ENCODE measurements at regions of chr19 and their contacts with region 1.

Region 1: GRCh38 chr19:35851213-35852028 is 883 bp downstream of the NPHS1 start:
- DNase-seq: no peak
- H3K4me3 ChIP-seq: no peak overlapping the region
- H3K27ac ChIP-seq: no peak overlapping the region
- H3K4me1 ChIP-seq: peaks cover 3% of the 10 kb centered on the region
- H3K27me3 ChIP-seq: peaks cover 6% of the 10 kb centered on the region
- CTCF ChIP-seq: no peak

Region 2: GRCh38 chr19:35430409-35431144 is 420.8 kb before region 1 on chr19:
- CTCF ChIA-PET with region 1: no interaction called
- dilution Hi-C with region 1: loop called (anchors 5 kb)
- in situ Hi-C with region 1: no loop called
- intact Hi-C with region 1: no loop called
- DNase-seq: no peak
- H3K4me3 ChIP-seq: no peak overlapping the region
- H3K27ac ChIP-seq: no peak overlapping the region
- H3K4me1 ChIP-seq: no peaks in the 10 kb centered on the region
- H3K27me3 ChIP-seq: no peaks in the 10 kb centered on the region
- CTCF ChIP-seq: no peak

Region 3: DNA sequence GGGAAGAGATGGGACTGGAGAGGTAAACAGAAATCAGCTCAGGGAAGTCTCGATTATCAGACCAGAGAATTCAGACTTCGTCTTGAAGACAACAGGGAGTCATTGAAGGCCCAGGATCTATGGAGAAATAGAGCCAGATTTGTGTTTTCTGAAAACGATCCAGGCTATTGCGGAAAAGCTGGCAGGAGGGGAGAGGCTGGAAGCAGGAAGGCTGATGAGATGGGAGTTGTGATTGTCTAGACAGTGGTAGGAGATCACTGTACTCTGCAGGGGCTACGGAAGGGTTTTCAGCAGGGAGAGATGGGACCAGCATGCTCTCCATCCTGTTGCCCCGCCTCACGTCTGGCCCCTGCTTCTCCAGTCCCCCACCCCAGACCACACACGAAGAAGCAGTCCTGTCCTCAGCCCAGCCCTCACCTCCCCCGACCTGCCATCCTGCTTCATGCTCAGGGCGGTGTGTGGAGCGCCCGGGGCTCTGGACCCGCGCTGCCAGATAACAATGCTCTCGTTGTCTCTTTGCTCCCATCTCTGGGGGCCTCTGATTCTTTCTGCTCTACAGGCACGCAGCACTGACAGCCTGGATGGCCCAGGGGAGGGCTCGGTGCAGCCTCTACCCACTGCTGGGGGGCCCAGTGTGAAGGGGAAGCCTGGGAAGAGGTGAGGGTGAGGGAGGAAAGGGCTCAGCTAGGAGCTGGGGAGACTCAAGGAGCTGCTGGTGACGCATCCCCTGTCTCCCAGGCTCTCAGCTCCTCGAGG is 74.2 kb before region 1 on chr19:
- CTCF ChIA-PET with region 1: no interaction called
- dilution Hi-C with region 1: no loop called
- in situ Hi-C with region 1: no loop called
- intact Hi-C with region 1: no loop called
- DNase-seq: no peak
- H3K4me3 ChIP-seq: no peak overlapping the region
- H3K27ac ChIP-seq: no peak overlapping the region
- H3K4me1 ChIP-seq: no peaks in the 10 kb centered on the region
- H3K27me3 ChIP-seq: no peaks in the 10 kb centered on the region
- CTCF ChIP-seq: no peak

Region 4: GRCh38 chr19:35805526-35806102 is 45.8 kb before region 1 on chr19:
- CTCF ChIA-PET with region 1: no interaction called
- dilution Hi-C with region 1: loop called (anchors 5 kb)
- in situ Hi-C with region 1: no loop called
- intact Hi-C with region 1: no loop called
- DNase-seq: no peak
- H3K4me3 ChIP-seq: no peak overlapping the region
- H3K27ac ChIP-seq: no peak overlapping the region
- H3K4me1 ChIP-seq: no peaks in the 10 kb centered on the region
- H3K27me3 ChIP-seq: no peaks in the 10 kb centered on the region
- CTCF ChIP-seq: no peak

Region 5: DNA sequence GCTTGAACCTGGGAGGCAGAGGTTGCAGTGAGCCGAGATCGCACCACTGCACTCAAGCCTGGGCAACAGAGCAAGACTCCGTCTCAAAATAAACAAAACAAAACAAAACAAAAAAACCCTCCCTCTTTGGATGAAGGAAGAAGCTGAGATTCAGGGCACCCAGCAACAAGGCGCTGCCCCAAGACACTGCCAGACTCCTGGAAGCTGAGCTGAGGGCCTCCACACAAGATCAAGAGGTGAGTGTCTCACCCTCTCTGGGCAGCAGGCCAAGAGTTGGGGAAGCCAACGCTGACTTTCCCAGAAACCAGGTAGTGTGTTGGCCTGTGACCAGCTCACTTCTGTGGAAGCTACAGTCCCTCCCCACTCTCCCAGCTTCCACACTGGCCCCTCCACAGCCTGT is 60.4 kb after region 1 on chr19:
- CTCF ChIA-PET with region 1: no interaction called
- dilution Hi-C with region 1: loop called (anchors 5 kb)
- in situ Hi-C with region 1: no loop called
- intact Hi-C with region 1: no loop called
- DNase-seq: peak; percentile 91
- H3K4me3 ChIP-seq: no peak overlapping the region
- H3K27ac ChIP-seq: no peak overlapping the region
- H3K4me1 ChIP-seq: no peaks in the 10 kb centered on the region
- H3K27me3 ChIP-seq: no peaks in the 10 kb centered on the region
- CTCF ChIP-seq: no peak

Region 6: GRCh38 chr19:35986664-35987570 is 135.5 kb after region 1 on chr19:
- CTCF ChIA-PET with region 1: no interaction called
- dilution Hi-C with region 1: loop called (anchors 5 kb)
- in situ Hi-C with region 1: no loop called
- intact Hi-C with region 1: no loop called
- DNase-seq: no peak
- H3K4me3 ChIP-seq: peak overlapping the region in 1 of 3 experiments; percentile 9
- H3K27ac ChIP-seq: no peak overlapping the region
- H3K4me1 ChIP-seq: no peaks in the 10 kb centered on the region
- H3K27me3 ChIP-seq: peaks cover 9% of the 10 kb centered on the region
- CTCF ChIP-seq: no peak

Region 7: GRCh38 chr19:36103626-36104552 is 252.5 kb after region 1 on chr19:
- CTCF ChIA-PET with region 1: no interaction called
- dilution Hi-C with region 1: no loop called
- in situ Hi-C with region 1: no loop called
- intact Hi-C with region 1: no loop called
- DNase-seq: peak; percentile 22
- H3K4me3 ChIP-seq: no peak overlapping the region
- H3K27ac ChIP-seq: no peak overlapping the region
- H3K4me1 ChIP-seq: peaks cover 23% of the 10 kb centered on the region
- H3K27me3 ChIP-seq: no peaks in the 10 kb centered on the region
- CTCF ChIP-seq: no peak